ENCODE measurements at regions of chr7 and their contacts with region 1.

Region 1: GRCh38 chr7:92833024-92833765 is 3.2 kb downstream of the CDK6 start:
- DNase-seq: peak; percentile 70 to 91
- H3K4me3 ChIP-seq: peak overlapping the region; percentile 94
- H3K27ac ChIP-seq: peak overlapping the region; percentile 77
- H3K4me1 ChIP-seq: peaks cover 44% of the 10 kb centered on the region
- H3K27me3 ChIP-seq: no peaks in the 10 kb centered on the region
- CTCF ChIP-seq: peak; percentile 77

Region 2: DNA sequence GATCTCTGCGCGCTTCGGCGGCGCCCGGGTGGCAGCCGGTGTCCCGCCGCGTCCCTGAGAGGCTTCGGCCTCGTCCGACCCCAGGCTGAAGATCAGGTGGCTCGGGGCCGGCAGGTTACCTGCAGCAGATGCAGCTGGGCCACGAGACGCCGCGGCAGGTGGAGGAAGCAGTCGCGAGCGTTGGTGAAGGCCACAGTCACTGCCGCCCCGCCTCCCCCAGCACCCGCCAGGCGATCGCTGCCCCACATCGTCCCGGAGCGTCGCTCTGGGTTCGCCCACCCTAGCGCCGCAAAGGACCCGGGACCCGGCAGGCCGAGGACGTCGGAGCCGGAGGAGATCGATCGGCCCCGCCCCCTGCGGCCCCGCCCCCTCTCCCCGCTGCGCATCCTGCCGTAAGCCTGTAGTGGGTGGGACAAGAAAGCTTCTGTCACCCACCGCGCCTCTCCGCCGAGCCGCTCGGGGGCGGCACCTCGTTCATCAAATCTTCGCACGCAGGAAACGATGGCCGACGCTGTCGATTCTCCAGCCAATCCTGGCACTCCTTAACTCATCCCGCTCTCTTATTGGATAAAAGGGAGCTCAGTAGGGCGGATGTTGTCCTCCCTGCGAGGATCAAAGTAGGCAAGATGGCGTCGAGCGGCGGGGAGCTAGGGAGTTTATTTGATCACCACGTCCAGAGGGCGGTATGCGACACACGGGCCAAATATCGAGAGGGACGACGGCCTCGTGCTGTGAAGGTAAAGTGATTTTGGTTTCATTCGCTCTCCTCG is 304.8 kb before region 1 on chr7 and contains the starts of genes PEX1 and RBM48:
- CTCF ChIA-PET with region 1: no interaction called
- POLR2A ChIA-PET with region 1: interaction called, 10 read pairs
- intact Hi-C with region 1: loop called (anchors 2 kb)
- DNase-seq: peak; percentile 97 to 99
- H3K4me3 ChIP-seq: peak within 1 kb of the TSS; percentile 95
- H3K27ac ChIP-seq: peak within 1 kb of the TSS; percentile 52
- H3K4me1 ChIP-seq: peaks cover 18% of the 10 kb centered on the region
- H3K27me3 ChIP-seq: no peaks in the 10 kb centered on the region
- CTCF ChIP-seq: peak; percentile 50
- total RNA-seq, gene PEX1: 13.4 and 20.2 TPM in 2 replicates
- total RNA-seq, gene RBM48: 7.4 and 11.5 TPM in 2 replicates

Region 3: DNA sequence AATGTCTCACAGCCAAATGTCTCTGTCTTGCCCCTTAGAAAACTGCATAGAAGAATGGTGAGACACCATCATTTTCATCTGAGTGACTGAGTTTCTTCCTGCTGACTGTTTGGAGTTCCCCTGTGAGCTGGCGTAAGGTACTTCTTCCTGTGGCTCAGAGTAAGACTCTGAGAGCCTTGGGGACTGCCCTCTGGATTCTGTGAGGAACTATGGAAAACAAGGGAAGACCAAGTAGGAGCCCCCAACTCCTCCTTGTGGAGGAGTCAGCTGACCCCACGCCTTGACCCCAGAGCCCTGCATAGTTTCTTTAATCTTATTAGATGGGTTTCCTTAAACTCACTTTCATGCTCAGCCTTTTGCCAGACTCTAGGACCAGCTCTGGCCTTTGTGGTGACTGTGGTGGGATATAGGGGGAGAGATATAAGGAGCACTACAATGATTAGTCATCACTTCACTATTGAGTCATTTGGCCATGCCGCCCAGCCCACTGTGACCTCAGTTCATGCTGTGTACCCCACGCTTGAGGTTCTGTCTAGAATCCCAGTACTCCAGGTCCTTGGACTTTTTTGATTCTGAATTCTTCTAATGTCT is 191.2 kb before region 1 on chr7:
- CTCF ChIA-PET with region 1: no interaction called
- POLR2A ChIA-PET with region 1: no interaction called
- intact Hi-C with region 1: no loop called
- DNase-seq: no peak
- H3K4me3 ChIP-seq: no peak overlapping the region
- H3K27ac ChIP-seq: 0 out of 2 replicates have a peak overlapping the region, but pooled peaks have one; percentile 9
- H3K4me1 ChIP-seq: peaks cover 19% of the 10 kb centered on the region
- H3K27me3 ChIP-seq: no peaks in the 10 kb centered on the region
- CTCF ChIP-seq: no peak

Region 4: DNA sequence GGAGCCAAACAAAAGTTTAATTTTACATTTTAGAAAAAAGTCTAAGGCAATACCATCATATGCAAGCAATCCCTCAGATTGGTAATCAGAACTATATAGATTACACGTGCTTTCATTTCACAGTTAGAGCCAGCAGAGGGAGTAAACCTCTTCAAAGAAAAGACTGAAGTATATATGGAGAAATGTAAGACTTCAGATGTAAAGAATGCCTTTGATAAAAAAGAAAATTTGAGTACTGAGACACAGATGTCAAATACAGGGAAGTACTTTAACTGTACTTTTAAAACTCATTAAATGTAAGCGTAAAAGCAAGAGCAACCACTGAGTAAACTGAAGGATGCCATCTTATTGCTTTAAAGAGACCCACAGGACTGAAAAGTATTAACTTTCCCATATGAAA is 141.6 kb before region 1 on chr7:
- CTCF ChIA-PET with region 1: interaction called, 3 read pairs
- POLR2A ChIA-PET with region 1: interaction called, 10 read pairs
- intact Hi-C with region 1: loop called (anchors 1 kb)
- DNase-seq: peak; percentile 8 to 66
- H3K4me3 ChIP-seq: no peak overlapping the region
- H3K27ac ChIP-seq: no peak overlapping the region
- H3K4me1 ChIP-seq: peaks cover 6% of the 10 kb centered on the region; the same call in 1 of the 2 replicates
- H3K27me3 ChIP-seq: no peaks in the 10 kb centered on the region
- CTCF ChIP-seq: peak; percentile 80

Region 5: DNA sequence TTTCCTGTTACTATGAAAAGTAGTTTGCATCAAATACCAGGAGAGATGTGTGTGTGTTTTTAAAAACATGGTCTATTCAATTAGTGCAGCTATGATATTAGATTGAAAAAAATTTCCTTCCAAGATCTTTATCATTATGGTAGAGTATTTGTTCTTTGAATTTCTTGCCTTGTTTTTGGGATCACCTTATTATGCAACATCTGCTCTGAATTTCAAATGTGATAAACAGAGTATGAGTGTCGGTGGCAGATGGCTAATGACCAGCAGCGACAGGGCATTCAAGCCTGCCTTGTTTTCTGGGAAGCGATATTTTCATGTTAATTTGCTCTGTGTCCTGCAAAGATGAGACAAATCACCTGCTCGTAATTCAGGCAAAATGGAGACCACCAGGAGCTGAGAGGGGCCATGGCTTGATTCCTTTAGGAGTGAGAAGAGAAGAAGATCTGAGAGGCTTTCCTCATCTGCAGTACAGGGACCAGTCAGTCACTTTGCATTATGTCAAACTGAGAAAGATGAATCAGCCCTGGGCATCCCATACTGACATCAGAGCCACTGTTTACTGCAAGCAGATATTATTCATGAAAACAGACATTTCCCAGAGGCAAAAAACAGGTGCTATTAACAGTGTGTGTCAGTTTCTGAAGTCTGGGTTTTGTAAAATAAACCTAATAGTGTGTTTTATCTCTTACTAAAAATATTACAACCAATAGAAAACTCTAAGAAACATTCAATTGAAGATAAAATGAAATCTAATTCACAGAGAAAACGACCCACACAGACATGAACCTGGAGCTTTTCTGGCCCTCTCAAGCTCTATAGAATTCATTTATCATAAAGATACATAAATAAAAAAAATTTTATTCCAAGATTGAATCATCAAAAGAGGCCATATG is 64.4 kb before region 1 on chr7:
- CTCF ChIA-PET with region 1: interaction called, 4 read pairs
- POLR2A ChIA-PET with region 1: no interaction called
- intact Hi-C with region 1: loop called (anchors 1 kb)
- DNase-seq: no peak
- H3K4me3 ChIP-seq: no peak overlapping the region
- H3K27ac ChIP-seq: peak overlapping the region; percentile 7; the same call in 1 of the 2 replicates
- H3K4me1 ChIP-seq: peaks cover 56% of the 10 kb centered on the region
- H3K27me3 ChIP-seq: no peaks in the 10 kb centered on the region
- CTCF ChIP-seq: no peak

Region 6: GRCh38 chr7:92933810-92934449 is 100.7 kb after region 1 on chr7:
- CTCF ChIA-PET with region 1: no interaction called
- POLR2A ChIA-PET with region 1: no interaction called
- intact Hi-C with region 1: loop called (anchors 5 kb)
- DNase-seq: peak; percentile 55 to 97
- H3K4me3 ChIP-seq: peak overlapping the region; percentile 14; the same call in 1 of the 2 replicates
- H3K27ac ChIP-seq: peak overlapping the region; percentile 64
- H3K4me1 ChIP-seq: peaks cover 25% of the 10 kb centered on the region
- H3K27me3 ChIP-seq: no peaks in the 10 kb centered on the region
- CTCF ChIP-seq: no peak

Region 7: DNA sequence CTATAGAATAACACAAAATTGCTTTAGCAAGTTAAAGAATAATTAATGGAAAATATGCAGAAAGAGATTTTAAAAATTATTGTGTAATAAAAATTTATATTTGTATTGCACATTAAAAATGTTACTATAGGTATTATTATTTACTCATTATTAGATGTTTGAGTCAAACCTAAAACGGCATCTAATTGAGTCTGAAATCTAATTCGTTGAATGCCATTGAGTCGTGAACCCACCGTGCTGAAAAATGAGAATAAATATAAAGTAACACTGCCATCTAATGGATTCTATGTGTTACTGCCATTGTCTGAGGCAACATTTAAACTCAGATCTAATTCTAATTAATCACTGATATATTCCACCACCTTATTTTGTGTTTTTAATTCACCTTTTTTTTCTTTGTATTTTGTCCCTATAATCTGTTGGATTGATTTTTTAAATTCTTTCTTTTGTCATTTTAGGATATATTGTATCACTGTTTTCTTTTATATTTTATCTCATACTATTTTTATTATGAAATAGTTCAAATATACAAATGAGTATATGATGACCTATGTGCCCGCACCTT is 222.4 kb after region 1 on chr7:
- CTCF ChIA-PET with region 1: no interaction called
- POLR2A ChIA-PET with region 1: interaction called, 5 read pairs
- intact Hi-C with region 1: loop called (anchors 1 kb)
- DNase-seq: peak in 1 of 2 experiments; percentile 50
- H3K4me3 ChIP-seq: no peak overlapping the region
- H3K27ac ChIP-seq: no peak overlapping the region
- H3K4me1 ChIP-seq: no peaks in the 10 kb centered on the region
- H3K27me3 ChIP-seq: no peaks in the 10 kb centered on the region
- CTCF ChIP-seq: peak; percentile 87

Region 8: GRCh38 chr7:93890464-93891068 is 1057.4 kb after region 1 on chr7 and contains the start of gene TFPI2:
- CTCF ChIA-PET with region 1: interaction called, 17 read pairs
- POLR2A ChIA-PET with region 1: no interaction called
- intact Hi-C with region 1: no loop called
- DNase-seq: peak; percentile 89 to 94
- H3K4me3 ChIP-seq: peak within 1 kb of the TSS; percentile 91
- H3K27ac ChIP-seq: peak within 1 kb of the TSS; percentile 68
- H3K4me1 ChIP-seq: peaks cover 17% of the 10 kb centered on the region
- H3K27me3 ChIP-seq: no peaks in the 10 kb centered on the region
- CTCF ChIP-seq: 0 out of 2 replicates have a peak, but pooled peaks have one; percentile 0
- total RNA-seq, gene TFPI2: 67.3 and 86.1 TPM in 2 replicates

Measured in PC-9 (cell line).